PC-3 (cell line): ENCODE measurements at regions of chr7 and their contacts with region 1.

Region 1: DNA sequence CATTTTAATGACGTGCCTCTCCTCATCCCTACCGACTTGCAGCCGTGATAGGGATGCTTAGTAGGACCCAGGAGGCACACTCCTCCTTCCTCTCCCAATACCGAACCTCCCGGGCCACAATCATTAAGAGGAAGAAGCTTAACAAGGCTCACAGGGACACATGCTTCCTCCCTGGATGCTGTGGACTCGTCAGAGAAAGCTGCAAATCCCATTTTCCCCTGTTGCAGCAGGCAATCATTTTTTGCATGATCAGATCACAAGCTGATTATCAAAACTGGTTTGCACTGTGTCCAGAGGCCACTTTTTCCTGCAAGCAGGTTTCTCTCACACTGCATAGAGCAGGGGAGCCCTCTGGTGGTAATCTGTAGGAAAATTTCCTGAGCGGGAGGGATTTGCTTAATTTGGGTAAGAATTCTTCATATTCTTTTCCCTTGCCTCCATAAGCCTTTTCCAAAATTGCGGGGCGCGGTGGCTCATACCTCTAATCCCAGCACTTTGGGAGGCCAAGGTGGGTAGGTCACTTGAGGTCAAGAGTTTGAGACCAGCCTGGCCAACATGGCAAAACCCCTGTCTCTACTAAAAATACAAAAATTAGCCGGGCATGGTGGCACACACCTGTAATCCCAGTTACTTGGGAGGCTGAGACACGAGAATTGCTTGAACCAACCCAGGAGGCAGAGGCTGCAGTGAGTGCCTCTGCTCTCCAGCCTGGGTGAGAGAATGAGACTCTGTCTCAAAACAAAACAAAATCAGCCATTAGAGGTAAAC is 16.1 kb upstream of the LAMB4 start:
- DNase-seq: peak; percentile 84
- ATAC-seq: peak; percentile 83
- H3K4me3 ChIP-seq: peak overlapping the region; percentile 51
- H3K27ac ChIP-seq: no peak overlapping the region
- H3K4me1 ChIP-seq: no peaks in the 10 kb centered on the region
- H3K27me3 ChIP-seq: peaks cover 22% of the 10 kb centered on the region
- CTCF ChIP-seq: peak; percentile 88

Region 2: DNA sequence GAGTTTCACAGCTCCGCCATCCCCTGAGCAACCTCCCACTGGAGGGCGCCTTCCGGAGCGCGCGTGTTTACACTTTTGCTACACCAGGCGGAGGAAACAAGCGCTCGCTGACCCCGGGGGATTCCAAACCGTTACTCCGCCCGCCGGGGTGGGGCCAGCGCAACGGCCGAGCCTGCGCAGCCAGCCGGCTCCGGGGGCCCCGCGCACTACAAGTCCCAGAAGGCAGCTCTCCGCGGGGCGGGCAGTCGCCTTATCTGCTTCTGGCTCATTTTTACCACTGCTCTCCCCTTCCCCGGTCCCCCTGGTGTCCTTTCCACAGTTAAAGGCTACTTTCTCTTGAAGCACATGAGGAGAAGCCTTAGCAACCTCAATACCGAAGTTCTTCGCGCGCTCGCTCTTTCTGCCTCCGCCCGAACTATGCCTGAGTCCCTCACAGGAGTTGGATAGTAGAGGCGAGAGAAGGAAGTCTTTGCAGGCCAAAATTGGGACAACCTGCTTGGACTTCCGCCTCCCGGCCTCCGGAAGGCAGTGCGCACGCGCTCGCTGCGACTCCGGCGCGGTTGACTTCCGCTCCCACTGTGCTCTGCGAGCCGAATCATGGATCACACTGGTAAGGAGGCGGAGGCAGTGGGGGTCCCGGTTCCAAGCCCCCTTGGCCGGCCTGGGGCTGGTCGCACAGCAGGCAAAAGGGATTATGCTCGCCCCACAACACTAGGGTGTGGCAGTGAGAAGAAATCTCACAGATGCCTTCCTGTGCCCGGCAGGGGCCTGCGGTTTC is 402.5 kb before region 1 on chr7 and contains the start of gene CBLL1:
- CTCF ChIA-PET with region 1: interaction called, 4 read pairs
- POLR2A ChIA-PET with region 1: no interaction called
- intact Hi-C with region 1: loop called (anchors 2 kb)
- DNase-seq: peak; percentile 91
- ATAC-seq: peak; percentile 93
- H3K4me3 ChIP-seq: peak within 1 kb of the TSS; percentile 98
- H3K27ac ChIP-seq: peak within 1 kb of the TSS; percentile 94
- H3K4me1 ChIP-seq: peaks cover 26% of the 10 kb centered on the region
- H3K27me3 ChIP-seq: no peaks in the 10 kb centered on the region
- CTCF ChIP-seq: peak; percentile 76
- total RNA-seq, gene CBLL1: 10.6 and 10.7 TPM in 2 replicates

Region 3: DNA sequence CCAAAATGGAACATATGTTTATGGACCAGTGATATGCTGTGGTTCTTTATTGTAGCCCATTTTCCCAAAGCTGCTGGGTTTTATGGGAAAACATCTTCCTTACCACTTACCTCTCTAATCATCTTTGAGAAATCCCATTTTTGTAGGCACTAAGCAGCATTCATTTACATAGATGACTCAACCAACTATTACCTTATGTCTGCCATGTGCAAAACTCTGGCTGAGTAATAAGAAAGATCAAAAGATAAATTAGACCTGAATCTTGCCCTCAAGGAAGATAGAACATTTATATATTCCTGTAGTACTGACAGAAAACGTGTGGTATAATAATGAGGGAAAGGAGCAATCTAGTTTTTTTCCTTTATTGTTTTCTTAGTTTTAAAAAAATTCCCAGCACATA is 378.0 kb before region 1 on chr7:
- CTCF ChIA-PET with region 1: no interaction called
- POLR2A ChIA-PET with region 1: no interaction called
- intact Hi-C with region 1: no loop called
- DNase-seq: peak; percentile 32
- ATAC-seq: peak; percentile 61
- H3K4me3 ChIP-seq: no peak overlapping the region
- H3K27ac ChIP-seq: no peak overlapping the region
- H3K4me1 ChIP-seq: no peaks in the 10 kb centered on the region
- H3K27me3 ChIP-seq: 0 out of 2 replicates have a peak, but pooled peaks cover 6% of the 10 kb centered on the region
- CTCF ChIP-seq: no peak

Region 4: DNA sequence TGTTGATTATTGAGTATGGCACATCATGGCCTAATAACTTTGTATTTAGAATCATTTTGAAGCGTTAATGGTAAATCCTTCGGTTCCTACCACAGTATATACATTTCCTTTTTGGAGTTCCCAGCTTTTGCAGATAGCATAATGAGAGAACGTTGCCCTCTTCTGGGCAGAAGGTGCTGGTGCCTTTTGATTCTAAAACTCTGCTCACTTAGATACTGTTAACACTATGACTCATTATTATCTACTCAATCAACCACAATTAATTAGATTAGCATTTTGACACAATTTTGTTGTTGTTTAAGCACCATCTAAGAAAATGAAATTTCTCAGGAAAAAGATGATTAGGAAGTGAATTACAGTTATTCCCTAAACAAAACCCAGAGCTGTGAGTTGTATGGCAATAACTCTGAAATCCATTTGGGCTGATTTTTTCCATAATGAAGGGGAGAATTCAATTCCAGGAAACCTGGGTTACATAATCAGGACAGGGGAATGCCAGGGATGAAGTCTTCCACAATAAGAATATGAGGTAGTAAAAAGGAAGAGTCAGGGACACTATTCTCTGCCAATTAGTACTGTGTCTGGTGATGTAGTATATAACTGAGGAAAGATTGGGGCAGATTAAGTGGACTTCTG is 266.7 kb before region 1 on chr7:
- CTCF ChIA-PET with region 1: interaction called, 10 read pairs
- POLR2A ChIA-PET with region 1: no interaction called
- intact Hi-C with region 1: loop called (anchors 1 kb)
- DNase-seq: peak; percentile 70
- ATAC-seq: peak; percentile 78
- H3K4me3 ChIP-seq: peak overlapping the region; percentile 38; the same call in 1 of the 2 replicates
- H3K27ac ChIP-seq: no peak overlapping the region
- H3K4me1 ChIP-seq: peaks cover 5% of the 10 kb centered on the region; the same call in 1 of the 2 replicates
- H3K27me3 ChIP-seq: no peaks in the 10 kb centered on the region
- CTCF ChIP-seq: peak; percentile 79

Region 5: GRCh38 chr7:107948645-107949497 is 197.4 kb before region 1 on chr7:
- CTCF ChIA-PET with region 1: no interaction called
- POLR2A ChIA-PET with region 1: no interaction called
- intact Hi-C with region 1: loop called (anchors 5 kb)
- DNase-seq: peak; percentile 97
- ATAC-seq: peak; percentile 72
- H3K4me3 ChIP-seq: peak overlapping the region; percentile 17; the same call in 1 of the 2 replicates
- H3K27ac ChIP-seq: peak overlapping the region; percentile 95
- H3K4me1 ChIP-seq: peaks cover 61% of the 10 kb centered on the region
- H3K27me3 ChIP-seq: no peaks in the 10 kb centered on the region
- CTCF ChIP-seq: no peak

Region 6: DNA sequence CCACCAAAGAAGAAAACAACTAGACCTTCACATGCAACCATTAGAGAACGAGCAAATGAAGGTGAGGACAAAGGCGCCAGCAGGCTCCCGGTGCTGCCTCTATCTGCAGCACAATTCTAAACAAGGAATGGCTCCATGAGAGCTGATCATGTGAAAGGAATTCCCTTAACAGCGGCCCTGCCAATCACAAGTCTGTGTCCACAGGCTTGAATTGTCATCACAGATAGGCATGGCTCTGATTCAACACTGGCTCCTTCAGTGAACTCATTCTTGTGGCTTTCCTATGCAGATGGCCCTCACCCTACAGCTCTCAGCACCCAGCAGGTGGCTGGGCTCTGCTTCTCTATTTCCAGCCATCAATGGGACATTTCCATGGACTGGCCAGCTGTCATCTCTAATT is 179.5 kb before region 1 on chr7:
- CTCF ChIA-PET with region 1: no interaction called
- POLR2A ChIA-PET with region 1: no interaction called
- intact Hi-C with region 1: loop called (anchors 1 kb)
- DNase-seq: peak; percentile 89
- ATAC-seq: peak; percentile 87
- H3K4me3 ChIP-seq: no peak overlapping the region
- H3K27ac ChIP-seq: peak overlapping the region; percentile 61
- H3K4me1 ChIP-seq: peaks cover 26% of the 10 kb centered on the region
- H3K27me3 ChIP-seq: no peaks in the 10 kb centered on the region
- CTCF ChIP-seq: no peak

Region 7: GRCh38 chr7:107995184-107996071 is 150.8 kb before region 1 on chr7:
- CTCF ChIA-PET with region 1: no interaction called
- POLR2A ChIA-PET with region 1: no interaction called
- intact Hi-C with region 1: loop called (anchors 5 kb)
- DNase-seq: peak; percentile 91
- ATAC-seq: peak; percentile 68
- H3K4me3 ChIP-seq: peak overlapping the region; percentile 22; the same call in 1 of the 2 replicates
- H3K27ac ChIP-seq: peak overlapping the region; percentile 88
- H3K4me1 ChIP-seq: peaks cover 65% of the 10 kb centered on the region
- H3K27me3 ChIP-seq: no peaks in the 10 kb centered on the region
- CTCF ChIP-seq: no peak

Region 8: GRCh38 chr7:108079648-108080591 is 66.3 kb before region 1 on chr7:
- CTCF ChIA-PET with region 1: no interaction called
- POLR2A ChIA-PET with region 1: no interaction called
- intact Hi-C with region 1: no loop called
- DNase-seq: peak; percentile 70
- ATAC-seq: peak; percentile 96
- H3K4me3 ChIP-seq: 0 out of 2 replicates have a peak overlapping the region, but pooled peaks have one; percentile 13
- H3K27ac ChIP-seq: peak overlapping the region; percentile 38
- H3K4me1 ChIP-seq: peaks cover 29% of the 10 kb centered on the region
- H3K27me3 ChIP-seq: no peaks in the 10 kb centered on the region
- CTCF ChIP-seq: no peak

Region 9: GRCh38 chr7:108114117-108114841 is 32.0 kb before region 1 on chr7:
- CTCF ChIA-PET with region 1: interaction called, 7 read pairs
- POLR2A ChIA-PET with region 1: no interaction called
- intact Hi-C with region 1: loop called (anchors 1 kb)
- DNase-seq: peak; percentile 53
- ATAC-seq: peak; percentile 66; the same call in 1 of the 2 replicates
- H3K4me3 ChIP-seq: no peak overlapping the region
- H3K27ac ChIP-seq: no peak overlapping the region
- H3K4me1 ChIP-seq: no peaks in the 10 kb centered on the region
- H3K27me3 ChIP-seq: no peaks in the 10 kb centered on the region
- CTCF ChIP-seq: peak; percentile 73